Upper lobe of right lung (tissue), 1 donor: ENCODE measurements at regions of chr11 and their contacts with region 1.

Region 1: DNA sequence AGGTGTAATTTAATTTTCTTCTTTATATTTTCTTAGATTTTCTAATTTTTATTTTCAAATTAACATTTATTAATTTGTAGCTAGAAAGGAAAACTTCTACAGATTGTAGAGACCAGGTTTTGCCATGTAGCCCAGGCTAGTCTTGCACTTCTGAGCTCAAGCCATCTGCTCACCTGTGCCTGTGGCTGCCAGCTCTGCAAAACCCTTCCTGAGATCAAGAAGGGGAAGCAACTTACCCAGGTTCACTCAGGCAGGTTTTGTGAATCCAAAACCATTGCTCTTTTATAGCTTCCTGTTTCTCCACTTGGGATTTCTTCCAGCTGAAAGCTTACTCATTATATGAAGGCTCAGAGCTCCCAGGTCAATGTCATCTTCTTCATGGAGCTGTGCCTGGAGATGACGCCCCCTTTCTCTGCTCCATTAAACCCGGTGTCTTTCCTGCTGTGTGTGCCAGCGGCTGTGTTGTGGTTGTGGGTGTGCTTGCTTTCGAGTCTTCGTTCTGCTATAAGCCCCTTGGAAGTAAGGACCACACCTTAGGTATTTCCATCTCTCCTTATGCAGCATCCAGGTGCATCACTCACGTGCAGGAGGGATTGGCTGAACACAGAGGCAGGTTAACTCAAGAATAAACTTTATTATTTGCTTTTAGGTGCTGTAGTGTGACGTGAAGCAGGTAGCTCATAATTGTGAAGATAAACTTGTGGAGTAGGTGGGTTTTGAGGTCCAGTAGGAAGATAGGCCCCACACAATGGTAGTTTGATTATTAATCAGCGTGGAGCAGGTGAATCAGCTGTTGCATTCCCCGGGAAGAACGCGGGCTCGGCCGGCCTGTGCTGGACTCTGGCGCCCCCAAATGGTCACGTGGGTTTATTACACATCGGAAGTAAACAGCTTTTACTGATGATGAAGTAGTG is 42.2 kb upstream of the INCENP start:
- DNase-seq: peak; percentile 84
- ATAC-seq: peak; percentile 98
- H3K4me3 ChIP-seq: no peak overlapping the region
- H3K27ac ChIP-seq: no peak overlapping the region
- H3K4me1 ChIP-seq: no peaks in the 10 kb centered on the region
- H3K27me3 ChIP-seq: no peaks in the 10 kb centered on the region
- CTCF ChIP-seq: peak; percentile 88

Region 2: GRCh38 chr11:61792310-61793085 is 289.1 kb before region 1 on chr11 and contains the starts of genes FEN1 and TMEM258:
- intact Hi-C with region 1: loop called (anchors 10 kb)
- DNase-seq: peak; percentile 96
- ATAC-seq: peak; percentile 91
- H3K4me3 ChIP-seq: peak within 1 kb of the TSS; percentile 85
- H3K27ac ChIP-seq: peak within 1 kb of the TSS; percentile 99
- H3K4me1 ChIP-seq: peaks cover 18% of the 10 kb centered on the region
- H3K27me3 ChIP-seq: no peaks in the 10 kb centered on the region
- CTCF ChIP-seq: no peak
- total RNA-seq, gene FEN1: 4.9 TPM
- total RNA-seq, gene TMEM258: 94.0 TPM

Region 3: GRCh38 chr11:61899146-61899841 is 182.3 kb before region 1 on chr11:
- intact Hi-C with region 1: loop called (anchors 5 kb)
- DNase-seq: peak; percentile 93
- ATAC-seq: peak; percentile 92
- H3K4me3 ChIP-seq: no peak overlapping the region
- H3K27ac ChIP-seq: no peak overlapping the region
- H3K4me1 ChIP-seq: no peaks in the 10 kb centered on the region
- H3K27me3 ChIP-seq: no peaks in the 10 kb centered on the region
- CTCF ChIP-seq: peak; percentile 100

Region 4: GRCh38 chr11:62508268-62509058 is 426.8 kb after region 1 on chr11:
- intact Hi-C with region 1: no loop called
- DNase-seq: peak; percentile 86
- ATAC-seq: peak; percentile 90
- H3K4me3 ChIP-seq: peak overlapping the region; percentile 25
- H3K27ac ChIP-seq: peak overlapping the region; percentile 61
- H3K4me1 ChIP-seq: peaks cover 31% of the 10 kb centered on the region
- H3K27me3 ChIP-seq: no peaks in the 10 kb centered on the region
- CTCF ChIP-seq: peak; percentile 62